HEK293 (cell line): ENCODE measurements at regions of chr15 and their contacts with region 1.

Region 1: DNA sequence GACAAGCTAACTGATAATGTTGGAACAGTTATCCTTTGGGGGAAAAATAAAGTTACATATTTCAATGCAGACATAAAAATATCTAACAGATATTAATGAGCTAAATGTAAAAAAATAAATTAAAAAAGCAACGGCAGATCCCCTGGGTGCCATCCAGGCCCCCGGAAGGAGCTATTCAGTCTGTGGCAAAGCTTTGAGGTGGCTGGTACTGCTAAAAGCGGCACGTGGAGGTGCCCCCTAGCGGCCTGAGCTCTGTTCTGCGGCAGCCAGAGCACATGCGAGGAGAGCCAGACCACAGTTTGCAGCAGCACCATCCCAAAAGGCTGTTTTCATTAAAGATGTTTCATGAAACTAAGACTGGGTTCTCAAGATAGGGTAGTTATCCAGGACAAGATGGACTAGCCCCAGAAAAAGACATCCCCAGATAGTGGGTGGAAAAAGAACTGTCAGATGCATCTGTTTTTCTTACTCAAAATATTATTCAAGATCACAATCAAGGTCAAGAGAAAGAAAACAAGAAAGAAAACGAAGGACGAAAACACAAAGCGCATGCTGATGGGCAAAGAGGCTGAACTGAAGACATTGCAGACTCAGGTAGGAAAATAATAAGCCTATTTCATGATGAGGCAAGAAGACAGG is 18.7 kb downstream of the AP3S2 start:
- H3K4me3 ChIP-seq: no peak overlapping the region
- H3K27ac ChIP-seq: no peak overlapping the region
- H3K4me1 ChIP-seq: no peaks in the 10 kb centered on the region
- CTCF ChIP-seq: peak; percentile 71

Region 2: GRCh38 chr15:89496155-89497098 is 378.6 kb before region 1 on chr15 and contains the start of gene RHCG:
- CTCF ChIA-PET with region 1: no interaction called
- POLR2A ChIA-PET with region 1: no interaction called
- H3K4me3 ChIP-seq: no peak within 1 kb of the TSS
- H3K27ac ChIP-seq: no peak within 1 kb of the TSS
- H3K4me1 ChIP-seq: no peaks in the 10 kb centered on the region
- CTCF ChIP-seq: no peak

Region 3: GRCh38 chr15:89728254-89728653 is 146.8 kb before region 1 on chr15:
- CTCF ChIA-PET with region 1: interaction called, 10 read pairs
- POLR2A ChIA-PET with region 1: no interaction called
- H3K4me3 ChIP-seq: no peak overlapping the region
- H3K27ac ChIP-seq: no peak overlapping the region
- H3K4me1 ChIP-seq: no peaks in the 10 kb centered on the region
- CTCF ChIP-seq: no peak

Region 4: GRCh38 chr15:89750560-89751542 is 124.2 kb before region 1 on chr15 and contains the start of gene MESP1:
- CTCF ChIA-PET with region 1: interaction called, 344 read pairs
- POLR2A ChIA-PET with region 1: interaction called, 3 read pairs
- H3K4me3 ChIP-seq: peak within 1 kb of the TSS; percentile 54
- H3K27ac ChIP-seq: peak within 1 kb of the TSS; percentile 77; the same call in 1 of the 2 replicates
- H3K4me1 ChIP-seq: peaks cover 8% of the 10 kb centered on the region; the same call in 1 of the 2 replicates
- CTCF ChIP-seq: peak; percentile 93

Region 5: DNA sequence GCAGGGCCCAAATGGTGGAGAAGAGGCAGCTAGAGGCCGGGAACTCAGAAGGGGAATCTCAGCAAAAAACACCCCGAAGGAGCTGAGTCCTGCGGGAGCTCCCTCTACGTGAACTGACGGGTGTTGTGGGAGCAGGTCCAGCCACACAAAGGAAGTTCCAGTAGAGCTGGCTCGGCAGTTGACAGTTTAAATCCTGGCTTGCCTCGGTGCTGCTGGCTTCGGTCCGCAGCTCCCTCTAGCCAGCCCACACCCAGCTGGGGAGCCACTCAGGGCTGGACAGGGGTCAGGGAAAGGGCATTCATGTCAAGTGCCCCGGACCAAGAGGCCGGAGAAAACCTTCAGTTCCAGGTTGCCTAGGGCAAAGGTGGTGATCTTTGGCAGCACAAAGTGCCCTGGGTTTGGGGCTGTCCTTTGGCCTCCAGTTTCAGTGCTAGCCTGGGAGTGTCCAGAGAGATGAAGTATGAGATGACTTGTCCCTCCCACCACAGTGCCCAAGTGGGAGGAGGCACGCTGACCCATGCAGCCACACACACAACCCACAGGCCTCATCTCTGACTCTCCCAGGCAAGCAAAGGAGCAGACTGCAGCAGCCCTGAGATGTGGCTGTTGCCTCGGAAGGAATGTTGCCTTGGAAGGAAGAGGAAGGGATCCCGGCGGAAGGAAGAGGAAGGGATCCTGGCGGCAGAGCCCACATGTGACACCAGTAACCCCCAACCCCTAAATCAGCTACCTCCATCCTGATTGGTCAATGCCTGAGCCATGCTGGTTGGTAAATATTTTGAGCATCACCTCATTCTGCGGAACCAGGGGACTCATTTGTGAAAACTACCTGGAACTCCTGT is 46.6 kb before region 1 on chr15:
- CTCF ChIA-PET with region 1: interaction called, 10 read pairs
- POLR2A ChIA-PET with region 1: no interaction called
- H3K4me3 ChIP-seq: no peak overlapping the region
- H3K27ac ChIP-seq: no peak overlapping the region
- H3K4me1 ChIP-seq: no peaks in the 10 kb centered on the region
- CTCF ChIP-seq: no peak

Region 6: DNA sequence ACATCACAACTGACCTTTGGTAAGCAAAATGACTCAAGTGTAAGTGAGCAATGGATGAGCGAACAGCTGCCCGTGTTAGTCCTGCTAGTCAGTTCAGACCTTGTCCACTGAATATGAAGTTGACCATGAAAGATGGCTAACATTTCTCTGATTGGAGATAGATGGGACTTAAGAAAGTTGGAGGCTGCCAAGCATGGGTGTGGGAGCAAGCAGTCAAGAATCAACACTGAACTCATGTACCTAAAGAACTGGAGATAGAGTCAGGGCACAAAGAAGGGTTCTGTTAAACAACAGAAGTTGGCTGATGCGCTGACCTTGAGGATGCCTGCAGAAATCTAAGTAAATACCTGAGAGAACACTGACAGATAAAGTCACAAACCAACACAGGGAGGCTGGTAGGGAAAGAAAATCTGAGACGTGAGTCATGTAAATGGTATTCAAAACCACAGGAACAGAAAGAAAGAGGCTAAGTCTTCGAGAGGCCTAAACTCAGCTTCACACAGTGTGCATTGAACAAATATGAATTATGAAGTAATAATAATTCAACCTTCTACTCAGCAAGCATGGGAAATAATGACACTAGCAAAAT is 29.6 kb before region 1 on chr15:
- CTCF ChIA-PET with region 1: interaction called, 29 read pairs
- POLR2A ChIA-PET with region 1: no interaction called
- H3K4me3 ChIP-seq: no peak overlapping the region
- H3K27ac ChIP-seq: no peak overlapping the region
- H3K4me1 ChIP-seq: no peaks in the 10 kb centered on the region
- CTCF ChIP-seq: no peak

Region 7: GRCh38 chr15:89863918-89864317 is 11.1 kb before region 1 on chr15:
- CTCF ChIA-PET with region 1: interaction called, 45 read pairs
- POLR2A ChIA-PET with region 1: no interaction called
- H3K4me3 ChIP-seq: no peak overlapping the region
- H3K27ac ChIP-seq: no peak overlapping the region
- H3K4me1 ChIP-seq: no peaks in the 10 kb centered on the region
- CTCF ChIP-seq: no peak

Region 8: DNA sequence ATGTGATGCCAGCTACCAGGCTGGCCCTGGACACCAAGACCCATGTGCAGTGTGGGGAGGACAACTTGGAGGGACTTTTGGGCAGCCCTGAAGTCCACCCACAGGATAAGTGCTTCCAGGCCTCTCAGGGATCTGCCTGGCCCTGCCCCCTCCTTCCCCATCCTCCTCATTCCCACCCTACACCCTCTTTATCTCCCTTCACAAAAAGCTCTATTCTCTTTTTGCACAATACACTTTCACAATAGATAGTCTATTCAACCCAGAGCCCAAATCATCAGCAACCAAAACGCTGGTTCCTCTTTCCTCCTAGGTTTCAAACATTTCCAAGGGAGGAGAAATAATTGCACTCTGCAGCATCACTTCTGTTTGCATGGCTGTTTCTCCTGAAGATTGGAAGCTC is 118.3 kb after region 1 on chr15:
- CTCF ChIA-PET with region 1: no interaction called
- POLR2A ChIA-PET with region 1: no interaction called
- H3K4me3 ChIP-seq: no peak overlapping the region
- H3K27ac ChIP-seq: no peak overlapping the region
- H3K4me1 ChIP-seq: peaks cover 3% of the 10 kb centered on the region; the same call in 1 of the 2 replicates
- CTCF ChIP-seq: no peak